CD8-positive, alpha-beta T cell (primary cell): ENCODE measurements at regions of chr9 and their contacts with region 1.

Region 1: DNA sequence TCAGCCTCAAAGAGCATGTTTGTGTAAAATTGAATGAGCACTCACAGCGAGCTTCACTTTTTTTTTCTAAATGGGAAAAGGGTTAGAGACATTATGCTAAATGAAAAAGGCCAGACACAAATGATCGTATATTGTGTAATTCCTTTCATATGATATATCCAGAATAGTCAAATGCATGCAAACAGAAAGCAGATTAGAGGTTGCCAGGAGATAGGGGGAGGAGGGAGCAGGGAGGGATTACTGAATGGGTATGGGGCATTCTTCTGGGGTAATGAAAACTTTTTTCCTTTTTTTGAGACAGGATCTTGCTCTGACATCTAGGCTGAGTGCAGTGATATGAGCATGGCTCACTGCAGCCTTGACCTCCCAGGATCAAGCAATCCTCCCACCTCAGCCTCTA is 47.1 kb downstream of the DMAC1 start:
- DNase-seq: no peak
- ATAC-seq: no peak
- H3K4me3 ChIP-seq: no peak overlapping the region
- H3K4me3 Mint-ChIP-seq: no peak overlapping the region
- H3K27ac ChIP-seq: no peak overlapping the region
- H3K27ac Mint-ChIP-seq: no peak overlapping the region
- H3K4me1 ChIP-seq: no peaks in the 10 kb centered on the region
- H3K4me1 Mint-ChIP-seq: peaks cover 7% of the 10 kb centered on the region
- H3K27me3 ChIP-seq: peaks cover 0 to 3% of the 10 kb centered on the region in 2 experiments
- H3K27me3 Mint-ChIP-seq: no peaks in the 10 kb centered on the region
- CTCF ChIP-seq: no peak

Region 2: GRCh38 chr9:7739595-7739994 is 12.9 kb before region 1 on chr9:
- CTCF ChIA-PET with region 1: no interaction called
- POLR2A ChIA-PET with region 1: no interaction called
- intact Hi-C with region 1: loop called in 1 of 2 experiments (anchors 2 kb)
- DNase-seq: no peak
- ATAC-seq: no peak
- H3K4me3 ChIP-seq: no peak overlapping the region
- H3K4me3 Mint-ChIP-seq: no peak overlapping the region
- H3K27ac ChIP-seq: no peak overlapping the region
- H3K27ac Mint-ChIP-seq: no peak overlapping the region
- H3K4me1 ChIP-seq: no peaks in the 10 kb centered on the region
- H3K4me1 Mint-ChIP-seq: no peaks in the 10 kb centered on the region
- H3K27me3 ChIP-seq: no peaks in the 10 kb centered on the region
- H3K27me3 Mint-ChIP-seq: no peaks in the 10 kb centered on the region
- CTCF ChIP-seq: no peak